Astrocyte of the cerebellum (primary cell): ENCODE measurements at regions of chr9 and their contacts with region 1.

Region 1: GRCh38 chr9:25891527-25891926 is 213.3 kb upstream of the TUSC1 start:
- DNase-seq: no peak
- H3K4me3 ChIP-seq: no peak overlapping the region
- CTCF ChIP-seq: no peak

Region 2: DNA sequence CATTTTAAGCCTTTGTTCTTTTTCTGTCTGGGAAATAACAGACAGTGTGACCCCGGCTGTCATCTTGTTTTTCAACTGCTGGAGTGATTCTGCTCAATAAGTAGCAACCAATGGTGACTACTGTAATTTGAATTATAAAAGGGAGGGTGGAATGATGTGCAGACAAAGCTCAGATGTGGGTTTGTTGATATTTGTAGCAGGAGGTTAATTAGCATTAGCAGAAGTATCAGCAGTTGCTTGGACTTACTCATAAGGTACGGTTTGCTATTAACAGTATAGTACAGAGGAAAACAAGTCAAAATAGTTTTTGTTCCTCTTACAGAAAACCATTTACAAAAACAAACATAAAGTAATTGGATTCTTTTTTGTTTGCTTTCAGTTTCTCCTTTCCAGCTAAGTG is 353.7 kb before region 1 on chr9:
- in situ Hi-C with region 1: loop called (anchors 25 kb)
- DNase-seq: no peak
- H3K4me3 ChIP-seq: no peak overlapping the region
- CTCF ChIP-seq: no peak

Region 3: GRCh38 chr9:25845867-25846266 is 45.7 kb before region 1 on chr9:
- in situ Hi-C with region 1: no loop called
- DNase-seq: no peak
- H3K4me3 ChIP-seq: no peak overlapping the region
- CTCF ChIP-seq: no peak

Region 4: GRCh38 chr9:25857147-25857546 is 34.4 kb before region 1 on chr9:
- in situ Hi-C with region 1: no loop called
- DNase-seq: no peak
- H3K4me3 ChIP-seq: no peak overlapping the region
- CTCF ChIP-seq: no peak

Region 5: GRCh38 chr9:25994605-25995004 is 103.1 kb after region 1 on chr9:
- in situ Hi-C with region 1: loop called (anchors 25 kb)
- DNase-seq: no peak
- H3K4me3 ChIP-seq: no peak overlapping the region
- CTCF ChIP-seq: no peak